Aorta (tissue), 5 donors: ENCODE measurements at regions of chr9 and their contacts with region 1.

Region 1: DNA sequence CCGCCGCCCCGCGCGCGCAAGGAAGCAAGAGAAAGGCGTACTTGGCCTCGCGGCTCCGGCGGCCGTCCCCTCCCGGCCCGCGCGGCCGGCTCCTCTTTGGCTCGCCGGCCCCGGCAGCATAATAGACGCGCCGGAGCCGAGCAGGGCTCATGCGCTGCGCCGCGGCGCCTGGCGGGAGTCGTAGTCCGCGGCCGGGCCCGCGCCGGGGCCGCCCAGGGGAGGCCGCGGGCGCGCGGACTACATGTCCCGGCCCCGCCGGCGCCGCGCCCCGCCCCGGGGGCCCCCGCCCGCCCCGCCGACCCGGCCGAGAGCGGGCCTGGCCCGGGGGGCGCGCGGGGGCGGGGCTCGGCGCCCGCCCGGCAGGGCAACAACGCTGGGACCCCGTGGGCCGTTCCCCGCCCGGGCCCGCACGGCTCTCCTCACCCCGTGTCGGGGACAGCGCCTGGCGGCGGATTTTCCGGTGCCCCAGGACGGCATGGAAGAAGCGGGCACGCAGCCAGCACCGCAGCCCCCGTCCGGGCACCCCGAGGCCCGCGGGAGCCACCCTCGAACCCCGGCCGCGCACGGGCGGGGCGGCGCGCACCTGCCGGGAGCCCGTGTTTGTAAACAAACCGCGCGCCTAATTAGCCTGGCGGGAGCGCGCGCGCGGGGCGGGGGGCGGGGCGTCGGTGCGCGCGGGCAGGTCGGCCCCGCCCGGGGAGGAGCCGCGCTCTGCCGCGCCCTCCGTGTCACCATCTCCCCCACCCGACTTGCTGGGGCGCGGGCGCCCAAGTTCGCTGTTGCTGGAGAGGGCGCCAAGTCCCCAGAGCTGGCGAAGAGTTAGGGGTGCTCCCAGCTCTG is at the start of gene BRD3:
- DNase-seq: peak; percentile 91 to 93
- ATAC-seq: peak; percentile 93
- H3K4me3 ChIP-seq: peak within 1 kb of the TSS; percentile 76 to 99
- H3K27ac ChIP-seq: peak within 1 kb of the TSS; percentile 38 to 94
- H3K4me1 ChIP-seq: no peaks in the 10 kb centered on the region
- H3K27me3 ChIP-seq: no peaks in the 10 kb centered on the region
- total RNA-seq, gene BRD3: 24.4 to 38.0 TPM

Region 2: DNA sequence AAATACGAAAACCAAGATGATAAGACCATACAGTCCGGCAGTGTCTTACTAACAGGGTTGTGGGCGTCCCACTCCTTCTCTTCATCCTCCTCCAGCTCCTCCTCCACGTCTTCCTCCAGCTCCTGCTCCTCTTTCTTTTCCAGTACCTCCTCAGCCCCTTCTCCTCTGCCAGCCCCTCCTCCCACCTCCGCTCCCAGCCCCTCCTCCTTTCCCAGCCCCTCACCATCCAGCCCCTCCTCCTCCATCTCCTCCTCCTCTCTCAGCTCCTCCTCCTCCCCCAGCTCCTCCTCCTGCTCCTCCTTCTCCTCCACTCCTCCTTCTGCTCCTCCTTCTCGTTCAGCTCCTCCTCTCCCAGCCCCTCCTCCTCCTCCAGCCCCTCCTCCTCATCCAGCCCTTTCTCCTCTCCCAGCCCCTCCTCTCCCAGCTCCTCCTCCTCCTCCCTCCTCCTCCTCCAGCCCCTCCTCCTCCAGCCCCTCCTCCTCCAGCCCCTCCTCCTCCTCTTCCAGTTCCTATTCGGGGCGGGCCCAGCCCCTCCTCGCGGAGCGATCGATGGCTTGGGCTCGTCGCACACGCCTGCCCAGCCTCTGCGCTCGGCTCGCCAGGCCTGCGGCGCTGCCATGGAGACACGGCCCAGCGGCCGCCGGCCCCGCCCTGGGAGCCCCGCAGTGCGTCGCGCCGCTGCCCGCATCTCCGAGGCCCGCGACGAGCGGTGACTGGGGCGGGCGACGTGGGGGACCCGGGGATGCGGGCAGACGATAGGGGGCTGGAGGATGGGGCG is 43.1 kb before region 1 on chr9 and contains the start of gene BRD3OS:
- intact Hi-C with region 1: loop called in 1 of 2 experiments (anchors 2 kb)
- DNase-seq: peak; percentile 99
- ATAC-seq: peak; percentile 100
- H3K4me3 ChIP-seq: peak within 1 kb of the TSS; percentile 57 to 61
- H3K27ac ChIP-seq: no peak within 1 kb of the TSS
- H3K4me1 ChIP-seq: no peaks in the 10 kb centered on the region
- H3K27me3 ChIP-seq: no peaks in the 10 kb centered on the region
- total RNA-seq, gene BRD3OS: 8.3 to 17.3 TPM

Region 3: DNA sequence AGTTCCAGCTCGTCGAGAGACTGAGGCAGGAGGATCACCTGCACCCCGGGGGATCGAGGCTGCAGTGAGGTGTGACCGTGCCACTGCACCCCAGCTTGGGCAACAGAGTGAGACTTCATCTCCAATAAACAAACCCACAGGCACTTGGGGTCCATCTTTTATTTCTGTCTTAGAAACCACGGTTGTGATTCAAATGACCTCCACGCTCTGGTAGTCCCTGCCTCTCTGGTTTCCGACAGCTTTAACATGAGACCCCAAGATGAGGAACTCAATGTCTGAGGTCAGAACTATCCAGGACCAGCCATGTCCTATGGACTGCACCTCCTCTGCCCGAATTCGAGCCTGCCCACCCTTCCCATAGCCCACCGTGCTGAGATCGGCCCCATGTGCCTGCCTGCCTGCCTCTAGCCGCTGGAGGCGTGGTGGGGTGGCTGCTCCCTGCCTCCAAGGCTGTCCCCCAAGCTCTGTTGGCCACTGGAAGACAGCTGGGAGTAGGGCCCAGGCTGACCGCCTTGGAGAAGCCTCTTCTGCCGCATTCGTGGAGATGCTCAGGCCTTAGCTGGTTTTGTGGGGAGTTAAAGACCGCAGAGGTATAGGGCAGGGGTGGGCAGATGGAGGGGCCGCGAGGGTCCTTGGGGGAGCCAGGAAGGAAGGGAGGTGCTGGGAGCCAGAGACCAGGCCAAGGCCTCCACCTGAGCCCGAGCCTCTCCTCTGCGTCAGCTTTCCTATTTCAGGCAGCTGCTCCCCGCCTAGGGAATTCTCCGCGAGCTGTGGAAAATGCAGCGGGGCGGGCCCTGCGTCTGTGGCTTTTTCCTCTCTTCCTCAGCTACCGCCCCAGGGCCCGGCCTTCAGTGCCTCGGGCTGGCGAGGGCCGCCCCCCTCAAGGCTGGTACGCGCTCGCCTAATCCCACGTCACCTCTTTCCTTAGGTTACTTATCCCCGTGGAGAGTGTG is 60.9 kb after region 1 on chr9:
- intact Hi-C with region 1: loop called in 1 of 2 experiments (anchors 2 kb)
- DNase-seq: no peak
- ATAC-seq: peak; percentile 32
- H3K4me3 ChIP-seq: no peak overlapping the region
- H3K27ac ChIP-seq: no peak overlapping the region
- H3K4me1 ChIP-seq: no peaks in the 10 kb centered on the region
- H3K27me3 ChIP-seq: no peaks in the 10 kb centered on the region

Region 4: DNA sequence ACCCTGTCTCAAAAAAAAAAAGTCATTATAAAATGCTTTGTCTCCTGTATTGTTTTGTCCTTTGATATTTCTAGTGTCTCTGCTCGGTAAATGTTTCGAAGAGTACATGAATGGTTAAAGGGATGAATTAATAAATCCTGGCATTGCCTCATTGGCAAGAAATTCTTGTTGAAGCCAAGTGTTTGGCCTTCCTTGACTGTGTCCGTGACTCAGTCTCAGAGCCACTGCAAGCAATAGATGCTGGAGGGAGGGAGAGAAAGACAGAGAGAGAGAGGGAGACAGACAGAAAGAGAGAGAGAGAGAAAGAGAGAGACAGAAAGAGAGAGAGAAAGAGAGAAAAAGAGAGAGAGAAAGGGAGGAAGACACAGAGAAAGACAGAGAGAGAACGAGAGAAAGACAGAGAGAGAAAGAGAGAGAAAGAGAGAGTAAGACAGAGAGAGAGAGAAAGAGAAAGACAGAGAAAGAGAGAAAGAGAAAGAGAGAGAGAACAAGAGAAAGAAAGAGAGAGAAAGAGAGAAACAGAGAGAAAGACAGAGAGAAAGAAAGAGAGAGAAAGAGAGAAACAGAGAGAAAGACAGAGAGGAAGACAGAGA is 185.6 kb after region 1 on chr9:
- intact Hi-C with region 1: no loop called
- DNase-seq: no peak
- ATAC-seq: no peak
- H3K4me3 ChIP-seq: no peak overlapping the region
- H3K27ac ChIP-seq: no peak overlapping the region
- H3K4me1 ChIP-seq: no peaks in the 10 kb centered on the region
- H3K27me3 ChIP-seq: no peaks in the 10 kb centered on the region

Region 5: DNA sequence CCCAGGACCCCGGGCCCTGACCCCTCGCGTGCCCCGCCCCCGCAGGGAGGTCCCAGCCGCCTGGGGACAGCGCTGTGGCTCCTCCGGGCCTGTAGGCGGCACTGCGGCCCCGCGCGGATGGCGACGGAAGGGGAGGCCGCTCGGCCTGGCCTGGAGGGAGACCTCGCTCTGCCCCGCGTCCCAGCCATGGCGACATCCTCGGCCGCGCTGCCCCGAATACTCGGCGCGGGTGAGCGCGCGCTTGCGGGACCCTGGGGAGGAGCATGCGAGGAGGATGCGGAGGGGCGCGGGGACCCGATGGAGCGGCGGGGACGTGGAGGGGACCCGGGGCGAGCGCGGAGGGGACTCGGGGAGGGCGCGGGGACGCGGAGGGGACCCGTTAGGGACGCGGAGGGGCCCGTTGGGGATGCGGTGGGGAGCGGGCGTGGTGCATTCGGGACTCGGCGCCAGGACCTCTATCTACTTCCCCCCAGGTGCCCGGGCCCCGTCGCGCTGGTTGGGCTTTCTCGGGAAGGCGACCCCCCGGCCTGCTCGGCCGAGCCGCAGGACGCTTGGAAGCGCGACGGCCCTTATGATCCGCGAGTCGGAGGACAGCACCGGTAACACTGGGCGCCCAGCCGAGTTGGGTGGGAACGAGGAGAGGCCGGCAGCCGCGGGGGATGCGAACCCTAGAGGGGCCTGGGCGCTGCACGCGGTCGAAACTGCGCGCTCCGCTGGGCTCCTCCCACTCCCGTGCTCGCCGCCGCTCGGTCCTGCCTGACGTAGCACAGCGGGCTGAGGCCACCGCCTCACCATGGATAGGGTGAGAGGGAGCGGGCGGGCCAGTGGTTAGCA is 1432.6 kb after region 1 on chr9 and contains the start of gene MRPS2:
- intact Hi-C with region 1: loop called in 1 of 2 experiments (anchors 5 kb)
- DNase-seq: peak; percentile 93 to 96
- ATAC-seq: peak; percentile 97
- H3K4me3 ChIP-seq: peak within 1 kb of the TSS; percentile 74 to 85
- H3K27ac ChIP-seq: no peak within 1 kb of the TSS
- H3K4me1 ChIP-seq: no peaks in the 10 kb centered on the region
- H3K27me3 ChIP-seq: no peaks in the 10 kb centered on the region
- total RNA-seq, gene MRPS2: 16.1 to 20.5 TPM